Activated CD8-positive, alpha-beta T cell treated with anti-CD3 and anti-CD28 coated beads for 36 hours (primary cell): ENCODE measurements at regions of chr11 and their contacts with region 1.

Region 1: GRCh38 chr11:47259178-47259977 is 1.6 kb downstream of the NR1H3 start:
- DNase-seq: peak; percentile 59
- ATAC-seq: peak; percentile 89
- H3K4me3 Mint-ChIP-seq: no peak overlapping the region
- H3K27ac Mint-ChIP-seq: no peak overlapping the region
- H3K4me1 Mint-ChIP-seq: peaks cover 16% of the 10 kb centered on the region
- H3K27me3 Mint-ChIP-seq: no peaks in the 10 kb centered on the region
- CTCF ChIP-seq: peak; percentile 67

Region 2: DNA sequence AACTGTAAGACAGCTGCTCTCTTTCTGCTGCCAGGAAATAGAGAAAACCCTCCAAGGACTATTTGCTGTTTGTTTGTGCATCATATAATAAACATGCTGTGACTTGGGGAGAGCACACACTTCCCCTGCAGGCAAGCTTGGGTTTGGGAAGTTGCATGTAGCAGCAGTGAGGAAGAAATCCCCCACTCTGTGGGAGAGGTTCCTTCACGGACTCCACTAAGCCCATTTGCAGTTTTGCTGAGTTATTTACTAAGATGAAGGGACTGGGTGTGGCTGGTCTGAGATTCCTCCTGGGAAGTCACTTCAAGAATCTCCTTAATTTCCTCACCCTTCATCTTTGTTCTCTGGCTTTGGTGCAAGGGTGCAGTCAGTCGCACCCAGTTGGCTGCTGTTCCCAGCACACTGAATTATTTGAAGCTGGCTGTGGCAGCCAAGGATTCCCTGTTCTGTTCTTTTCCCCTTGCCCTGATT is 187.6 kb before region 1 on chr11:
- CTCF ChIA-PET with region 1: no interaction called
- POLR2A ChIA-PET with region 1: no interaction called
- intact Hi-C with region 1: no loop called
- DNase-seq: no peak
- ATAC-seq: no peak
- H3K4me3 Mint-ChIP-seq: no peak overlapping the region
- H3K27ac Mint-ChIP-seq: no peak overlapping the region
- H3K4me1 Mint-ChIP-seq: no peaks in the 10 kb centered on the region
- H3K27me3 Mint-ChIP-seq: no peaks in the 10 kb centered on the region
- CTCF ChIP-seq: no peak

Region 3: DNA sequence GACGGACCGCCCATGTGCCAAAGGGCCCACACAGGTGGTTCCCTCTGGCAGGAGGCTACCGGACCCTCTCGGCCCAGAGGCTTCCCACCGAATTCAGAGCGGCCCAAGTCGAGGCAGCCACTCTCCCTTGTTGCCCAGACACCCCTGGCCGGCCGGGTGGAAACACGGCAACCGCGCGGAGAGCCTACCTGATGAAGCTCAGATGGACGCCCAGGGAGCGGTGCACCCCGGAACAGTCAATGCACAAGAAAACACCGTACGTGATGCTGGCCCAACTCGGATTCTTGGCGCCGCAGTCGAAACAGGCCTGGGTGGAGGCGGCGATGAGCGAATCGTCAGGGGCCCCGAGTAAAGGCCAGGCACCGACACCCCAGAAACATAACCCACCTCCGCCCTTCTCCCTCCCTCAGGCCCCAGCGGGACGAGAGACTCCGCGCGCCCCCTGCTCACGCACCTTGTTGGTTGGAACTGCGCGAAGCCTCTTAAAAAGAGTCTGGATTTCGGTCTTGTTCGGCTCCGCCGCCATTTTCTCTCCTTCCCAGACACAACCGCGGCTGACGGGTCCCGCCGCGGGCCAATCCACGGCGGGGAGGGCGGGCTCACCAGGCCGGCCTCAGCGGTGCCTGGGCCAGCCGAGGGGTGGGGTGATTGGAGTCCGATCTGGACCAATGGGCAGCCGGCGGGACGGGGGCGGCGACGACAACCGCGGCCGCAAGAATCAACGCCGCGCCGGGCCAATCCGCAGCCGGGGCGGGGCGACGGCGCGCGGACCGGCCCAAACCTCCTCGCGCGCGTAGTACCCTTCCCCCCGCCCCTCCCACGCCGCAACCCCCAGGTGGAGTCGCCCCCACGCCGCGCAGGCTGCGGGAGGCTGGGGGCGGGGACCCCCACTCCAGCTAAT is 82.8 kb before region 1 on chr11 and contains the start of gene ARFGAP2:
- CTCF ChIA-PET with region 1: interaction called, 46 read pairs
- POLR2A ChIA-PET with region 1: interaction called, 5 read pairs
- intact Hi-C with region 1: loop called (anchors 5 kb)
- DNase-seq: peak; percentile 97
- ATAC-seq: peak; percentile 94
- H3K4me3 Mint-ChIP-seq: peak within 1 kb of the TSS; percentile 94
- H3K27ac Mint-ChIP-seq: peak within 1 kb of the TSS; percentile 100
- H3K4me1 Mint-ChIP-seq: peaks cover 43% of the 10 kb centered on the region
- H3K27me3 Mint-ChIP-seq: no peaks in the 10 kb centered on the region
- CTCF ChIP-seq: no peak
- total RNA-seq, gene ARFGAP2: 70.1 to 71.7 TPM

Region 4: GRCh38 chr11:47186076-47186936 is 73.1 kb before region 1 on chr11 and contains the start of gene PACSIN3:
- CTCF ChIA-PET with region 1: interaction called, 46 read pairs
- POLR2A ChIA-PET with region 1: no interaction called
- intact Hi-C with region 1: no loop called
- DNase-seq: peak; percentile 28
- ATAC-seq: peak; percentile 67
- H3K4me3 Mint-ChIP-seq: peak within 1 kb of the TSS; percentile 71
- H3K27ac Mint-ChIP-seq: no peak within 1 kb of the TSS
- H3K4me1 Mint-ChIP-seq: peaks cover 13% of the 10 kb centered on the region
- H3K27me3 Mint-ChIP-seq: peaks cover 21% of the 10 kb centered on the region
- CTCF ChIP-seq: peak; percentile 21
- total RNA-seq, gene PACSIN3: 4.7 to 8.0 TPM

Region 5: GRCh38 chr11:47233989-47234668 is 25.2 kb before region 1 on chr11:
- CTCF ChIA-PET with region 1: interaction called, 30 read pairs
- POLR2A ChIA-PET with region 1: interaction called, 5 read pairs
- intact Hi-C with region 1: no loop called
- DNase-seq: peak; percentile 19
- ATAC-seq: peak; percentile 42
- H3K4me3 Mint-ChIP-seq: no peak overlapping the region
- H3K27ac Mint-ChIP-seq: peak overlapping the region; percentile 56
- H3K4me1 Mint-ChIP-seq: peaks cover 22% of the 10 kb centered on the region
- H3K27me3 Mint-ChIP-seq: no peaks in the 10 kb centered on the region
- CTCF ChIP-seq: no peak

Region 6: DNA sequence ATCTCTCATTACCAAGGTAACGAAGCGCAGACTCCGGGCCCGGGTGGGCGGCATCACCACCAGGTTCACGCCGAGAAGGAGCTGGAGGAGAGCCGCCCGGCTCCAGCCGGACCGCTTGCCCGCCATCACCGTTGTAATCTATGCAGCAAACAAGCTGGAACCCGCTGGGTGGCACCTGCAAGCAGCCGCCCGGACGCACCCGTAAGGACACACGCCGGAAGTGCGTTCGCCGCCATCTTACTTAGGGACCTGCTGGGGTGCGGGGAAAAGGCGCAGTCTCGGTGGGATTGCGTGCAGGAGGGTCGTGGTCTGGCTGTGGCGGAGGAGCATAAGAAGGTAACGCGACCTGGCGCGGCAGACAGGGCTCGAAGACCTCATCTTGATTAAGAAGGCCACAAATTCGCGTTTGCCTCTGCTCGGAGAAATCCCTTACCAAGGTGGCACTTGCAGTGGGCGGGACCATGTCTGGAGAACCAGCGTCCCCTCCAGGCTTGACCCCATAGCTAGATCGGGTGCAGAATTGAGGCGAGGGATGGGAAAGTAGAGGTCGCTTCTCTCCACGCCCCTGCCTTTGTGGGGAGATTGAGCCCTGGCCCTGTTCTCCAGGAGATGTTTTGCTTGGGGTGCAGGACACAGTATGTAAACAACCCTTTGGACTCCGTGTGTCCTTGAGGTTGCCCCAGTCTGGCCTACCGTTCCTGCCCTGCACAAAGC is 10.6 kb before region 1 on chr11 and contains the start of gene ACP2:
- CTCF ChIA-PET with region 1: interaction called, 47 read pairs
- POLR2A ChIA-PET with region 1: interaction called, 21 read pairs
- intact Hi-C with region 1: no loop called
- DNase-seq: peak; percentile 94
- ATAC-seq: peak; percentile 97
- H3K4me3 Mint-ChIP-seq: peak within 1 kb of the TSS; percentile 95
- H3K27ac Mint-ChIP-seq: peak within 1 kb of the TSS; percentile 98
- H3K4me1 Mint-ChIP-seq: peaks cover 24% of the 10 kb centered on the region
- H3K27me3 Mint-ChIP-seq: no peaks in the 10 kb centered on the region
- CTCF ChIP-seq: no peak
- total RNA-seq, gene ACP2: 9.4 to 13.4 TPM